ENCODE measurements at regions of chr11 and their contacts with region 1.

Region 1: GRCh38 chr11:118435893-118436624 is at the start of gene KMT2A:
- DNase-seq: peak; percentile 95
- ATAC-seq: peak; percentile 86
- H3K4me3 ChIP-seq: peak within 1 kb of the TSS; percentile 99
- H3K27ac ChIP-seq: peak within 1 kb of the TSS; percentile 95
- H3K4me1 ChIP-seq: peaks cover 6% of the 10 kb centered on the region
- H3K27me3 ChIP-seq: no peaks in the 10 kb centered on the region
- CTCF ChIP-seq: no peak
- POLR2A ChIP-seq: no peak; the same call in 1 of the 2 replicates
- RAD21 ChIP-seq: no peak
- total RNA-seq, gene KMT2A: 19.7 and 21.1 TPM in 2 replicates

Region 2: DNA sequence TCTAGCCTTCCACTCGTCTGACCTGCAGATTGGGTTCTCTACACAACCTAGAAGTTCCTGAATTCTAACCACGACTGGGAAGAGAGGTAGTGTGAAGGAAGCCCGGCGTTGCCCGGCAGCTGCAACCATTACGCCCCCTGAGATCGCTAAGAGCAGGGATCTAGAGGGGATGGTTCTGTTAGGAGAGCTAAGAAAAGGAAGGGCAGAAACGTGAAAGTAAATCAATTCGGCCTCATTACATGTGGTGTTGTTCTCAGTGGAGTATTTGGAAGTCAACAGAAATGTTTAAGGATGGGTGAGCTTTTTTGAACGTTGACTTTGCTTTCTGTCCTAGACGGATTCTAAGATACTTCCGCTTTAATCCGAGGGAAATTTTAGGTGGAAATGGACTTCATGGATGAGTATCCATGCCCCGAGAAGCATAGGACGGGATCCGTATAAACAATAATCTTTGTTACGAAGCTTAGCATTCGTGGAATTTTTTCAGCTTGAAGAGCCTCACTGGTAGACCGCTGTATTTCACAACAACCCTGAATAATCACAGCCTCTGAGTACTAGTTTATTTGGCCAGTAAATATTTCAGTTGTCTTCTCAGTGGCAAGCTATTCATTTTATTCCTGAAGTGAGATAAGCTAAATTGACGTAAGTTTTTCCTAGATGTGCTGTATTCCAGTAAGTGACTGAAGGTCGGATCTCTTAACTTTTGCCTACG is 34.0 kb before region 1 on chr11:
- CTCF ChIA-PET with region 1: interaction called, 3 read pairs
- POLR2A ChIA-PET with region 1: interaction called, 7 read pairs
- dilution Hi-C with region 1: no loop called
- in situ Hi-C with region 1: no loop called
- intact Hi-C with region 1: loop called (anchors 1 kb)
- DNase-seq: peak; percentile 92
- ATAC-seq: peak; percentile 55
- H3K4me3 ChIP-seq: peak overlapping the region; percentile 86
- H3K27ac ChIP-seq: peak overlapping the region; percentile 91
- H3K4me1 ChIP-seq: peaks cover 5% of the 10 kb centered on the region
- H3K27me3 ChIP-seq: no peaks in the 10 kb centered on the region
- CTCF ChIP-seq: no peak
- POLR2A ChIP-seq: peak; percentile 27; the same call in 1 of the 2 replicates
- RAD21 ChIP-seq: no peak

Measured in IMR-90 (cell line).